ENCODE measurements at regions of chr1 and their contacts with region 1.

Region 1: GRCh38 chr1:152926091-152926490 is 17.7 kb downstream of the IVL start:
- DNase-seq: peak; percentile 52
- CTCF ChIP-seq: peak; percentile 65

Region 2: DNA sequence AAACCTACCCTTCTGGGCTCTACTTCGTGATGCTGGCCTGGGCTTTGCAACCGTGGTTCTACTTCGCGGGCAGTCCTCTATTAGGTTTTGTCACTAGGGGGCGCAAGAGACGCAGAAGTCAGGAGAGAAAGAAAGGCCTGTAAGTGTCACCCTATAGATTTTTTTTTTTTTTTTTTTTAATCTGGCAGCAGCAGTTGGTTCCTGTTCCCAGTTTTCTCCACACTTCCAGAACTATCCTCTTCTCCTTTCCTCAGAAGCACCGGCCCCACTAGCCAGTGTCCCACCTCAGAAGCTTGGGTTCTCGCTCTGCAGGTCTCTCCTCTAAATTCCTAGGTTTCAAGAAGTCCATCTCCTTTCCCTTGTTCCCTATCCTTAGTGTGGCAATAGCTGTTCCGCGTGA is 272.0 kb before region 1 on chr1:
- CTCF ChIA-PET with region 1: interaction called, 20 read pairs
- POLR2A ChIA-PET with region 1: no interaction called
- DNase-seq: peak; percentile 49
- CTCF ChIP-seq: peak; percentile 66

Region 3: DNA sequence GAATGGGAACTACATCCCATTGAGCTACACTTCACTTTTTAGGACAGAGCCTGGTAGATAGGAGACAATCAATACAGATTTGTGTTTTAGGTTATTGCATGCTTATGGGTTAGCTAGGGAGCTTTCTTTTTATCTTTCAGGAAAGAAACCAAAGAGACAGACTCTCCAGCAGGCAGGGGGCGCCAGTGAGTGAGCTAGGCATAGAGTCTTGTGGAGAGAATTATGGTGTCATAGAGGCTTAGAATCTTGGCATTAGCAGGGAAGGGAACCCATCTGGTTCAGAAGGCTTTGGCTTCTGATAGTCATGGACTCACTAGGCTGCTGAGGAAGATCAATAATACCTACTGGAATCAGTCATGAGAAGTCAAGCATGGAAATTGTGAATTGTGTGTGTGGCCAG is 48.0 kb before region 1 on chr1 and contains the start of gene SMCP:
- CTCF ChIA-PET with region 1: interaction called, 131 read pairs
- POLR2A ChIA-PET with region 1: no interaction called
- DNase-seq: no peak
- CTCF ChIP-seq: peak; percentile 4

Region 4: GRCh38 chr1:152941021-152941711 is 15.1 kb after region 1 on chr1:
- CTCF ChIA-PET with region 1: interaction called, 12 read pairs
- POLR2A ChIA-PET with region 1: no interaction called
- DNase-seq: no peak
- CTCF ChIP-seq: no peak

Region 5: GRCh38 chr1:153122831-153123421 is 196.8 kb after region 1 on chr1:
- CTCF ChIA-PET with region 1: no interaction called
- POLR2A ChIA-PET with region 1: no interaction called
- DNase-seq: peak; percentile 7
- CTCF ChIP-seq: no peak

Region 6: DNA sequence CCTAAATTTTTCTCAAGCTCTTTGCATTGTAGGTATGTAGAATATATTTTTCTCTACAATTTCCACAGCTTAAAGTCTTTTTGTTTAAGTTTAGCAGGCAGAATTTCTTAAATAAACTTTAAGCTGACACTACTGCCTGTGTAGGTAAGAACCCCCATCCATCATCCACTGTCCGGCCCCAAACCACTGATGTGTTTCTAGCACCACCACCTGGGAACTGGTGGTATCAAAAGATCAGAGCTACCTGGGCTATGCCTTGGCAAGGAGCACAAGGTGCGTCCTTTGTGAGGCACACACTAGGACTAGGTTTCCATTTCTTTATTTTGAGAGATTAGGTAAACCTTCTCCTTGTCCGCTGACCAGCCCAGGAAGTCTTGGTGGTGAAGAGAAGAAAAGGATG is 266.6 kb after region 1 on chr1:
- CTCF ChIA-PET with region 1: interaction called, 12 read pairs
- POLR2A ChIA-PET with region 1: no interaction called
- DNase-seq: no peak
- CTCF ChIP-seq: peak; percentile 50

Measured in GM10248 (cell line).